ENCODE measurements at regions of chr17 and their contacts with region 1.

Region 1: DNA sequence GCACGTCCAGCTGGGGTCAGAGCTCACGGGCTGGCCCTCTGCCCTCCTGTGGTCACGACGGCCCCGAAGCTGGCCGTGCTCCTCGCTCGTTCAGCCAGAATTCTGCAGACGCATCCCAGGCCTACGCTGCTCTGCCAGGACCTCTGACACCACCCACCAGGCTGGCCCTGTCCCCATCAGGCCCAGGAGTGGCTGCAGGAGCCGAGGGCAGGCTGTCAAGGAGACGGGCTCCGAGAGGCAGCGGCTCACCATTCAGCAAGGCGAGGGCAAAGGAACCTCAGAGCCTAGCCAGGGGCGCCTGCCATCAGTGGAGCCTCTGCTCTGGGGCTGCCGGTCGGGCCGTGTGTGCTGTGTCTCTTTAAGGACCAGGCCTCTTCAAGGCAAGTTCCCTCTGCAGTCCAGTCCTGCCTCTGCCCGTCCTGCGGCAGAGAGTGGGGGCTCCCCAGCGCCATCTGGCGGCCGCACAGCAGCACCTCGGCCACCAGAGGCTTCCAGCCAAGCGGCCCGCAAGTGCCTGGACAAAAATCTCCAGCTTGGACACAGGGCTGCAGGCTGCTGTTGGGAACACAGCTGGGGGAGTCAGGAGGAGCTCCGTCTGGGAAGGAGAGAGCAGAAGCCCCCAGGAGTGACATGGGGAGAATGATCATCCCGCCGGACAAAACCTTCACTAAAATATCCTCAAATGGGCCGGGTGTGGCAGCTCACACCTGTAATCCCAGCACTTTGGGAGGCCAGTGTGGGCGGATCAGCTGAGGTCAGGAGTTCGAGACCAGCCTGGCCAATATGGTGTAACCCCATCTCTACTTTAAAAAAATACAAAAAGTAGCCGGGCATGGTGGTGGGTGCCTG is 7.4 kb upstream of the ABR start:
- DNase-seq: peak; percentile 49
- H3K4me3 ChIP-seq: peak overlapping the region; percentile 25; the same call in 1 of the 2 replicates
- CTCF ChIP-seq: peak; percentile 99

Region 2: GRCh38 chr17:1055751-1056645 is 131.1 kb before region 1 on chr17:
- CTCF ChIA-PET with region 1: interaction called, 21 read pairs
- POLR2A ChIA-PET with region 1: no interaction called
- DNase-seq: no peak
- H3K4me3 ChIP-seq: no peak overlapping the region
- CTCF ChIP-seq: peak; percentile 76

Region 3: DNA sequence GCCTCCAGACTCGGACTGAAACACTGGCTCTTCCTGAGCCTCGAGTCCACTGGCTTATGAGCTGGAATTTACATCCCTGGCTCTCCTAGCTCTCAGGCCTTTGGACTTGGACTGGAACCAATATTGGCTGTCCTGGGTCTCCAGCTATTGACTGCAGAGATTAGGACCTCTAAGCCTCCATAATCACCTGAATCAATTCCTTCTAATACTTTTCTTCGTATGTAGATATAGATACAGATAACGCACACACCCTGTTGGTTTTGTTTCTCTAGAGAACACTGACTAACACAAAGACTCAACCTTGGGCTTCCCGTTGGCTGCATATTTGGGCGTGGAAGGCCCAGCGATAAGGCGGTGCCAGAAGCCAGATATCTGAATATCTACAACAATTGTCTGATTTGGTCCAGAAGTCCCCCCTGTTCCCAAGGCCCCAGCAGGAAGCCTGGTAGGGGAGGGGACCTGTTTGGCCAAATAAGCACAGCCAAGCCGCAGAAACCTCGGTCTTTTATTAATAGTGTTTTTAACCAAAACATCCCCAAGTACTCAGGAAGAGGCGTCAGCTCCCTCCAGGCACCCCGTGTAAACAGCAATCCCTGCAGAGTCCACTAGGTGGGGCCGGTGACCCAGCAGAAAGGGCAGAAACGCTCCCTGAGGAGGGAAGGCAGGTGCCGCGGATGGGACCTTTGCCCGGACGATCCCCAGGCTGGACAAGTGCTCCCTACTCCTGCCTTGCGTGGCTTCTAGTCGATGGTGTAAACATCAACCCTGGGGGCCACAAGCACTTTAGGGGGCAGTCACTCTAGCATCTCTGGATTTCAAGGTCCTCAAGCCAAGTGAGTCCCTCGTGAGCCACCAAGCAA is 64.4 kb before region 1 on chr17:
- CTCF ChIA-PET with region 1: interaction called, 273 read pairs
- POLR2A ChIA-PET with region 1: interaction called, 5 read pairs
- DNase-seq: no peak
- H3K4me3 ChIP-seq: no peak overlapping the region
- CTCF ChIP-seq: peak; percentile 86

Region 4: DNA sequence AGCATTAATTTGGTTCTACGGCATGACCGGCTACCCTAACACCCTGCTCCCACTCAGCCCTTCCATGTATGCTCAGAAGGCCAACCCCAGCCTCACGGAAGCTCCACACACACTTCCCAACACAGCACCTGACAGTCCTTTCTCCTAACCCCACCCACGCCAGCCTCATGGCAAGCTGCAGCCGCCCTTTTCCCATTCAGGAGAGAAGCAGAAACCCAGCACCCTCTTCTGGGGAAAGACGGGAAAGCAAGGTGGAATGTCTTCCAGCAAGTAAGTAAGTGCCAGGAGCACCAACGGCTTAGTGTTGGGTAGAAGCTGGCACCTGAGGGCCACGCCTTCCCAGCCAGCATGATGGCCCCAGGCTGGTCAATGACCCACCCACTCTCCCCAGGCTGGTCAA is 39.5 kb before region 1 on chr17:
- CTCF ChIA-PET with region 1: interaction called, 11 read pairs
- POLR2A ChIA-PET with region 1: no interaction called
- DNase-seq: no peak
- H3K4me3 ChIP-seq: no peak overlapping the region
- CTCF ChIP-seq: peak; percentile 49

Region 5: GRCh38 chr17:1197781-1198490 is 10.8 kb after region 1 on chr17:
- CTCF ChIA-PET with region 1: interaction called, 55 read pairs
- POLR2A ChIA-PET with region 1: interaction called, 4 read pairs
- DNase-seq: no peak
- H3K4me3 ChIP-seq: no peak overlapping the region
- CTCF ChIP-seq: no peak

Region 6: DNA sequence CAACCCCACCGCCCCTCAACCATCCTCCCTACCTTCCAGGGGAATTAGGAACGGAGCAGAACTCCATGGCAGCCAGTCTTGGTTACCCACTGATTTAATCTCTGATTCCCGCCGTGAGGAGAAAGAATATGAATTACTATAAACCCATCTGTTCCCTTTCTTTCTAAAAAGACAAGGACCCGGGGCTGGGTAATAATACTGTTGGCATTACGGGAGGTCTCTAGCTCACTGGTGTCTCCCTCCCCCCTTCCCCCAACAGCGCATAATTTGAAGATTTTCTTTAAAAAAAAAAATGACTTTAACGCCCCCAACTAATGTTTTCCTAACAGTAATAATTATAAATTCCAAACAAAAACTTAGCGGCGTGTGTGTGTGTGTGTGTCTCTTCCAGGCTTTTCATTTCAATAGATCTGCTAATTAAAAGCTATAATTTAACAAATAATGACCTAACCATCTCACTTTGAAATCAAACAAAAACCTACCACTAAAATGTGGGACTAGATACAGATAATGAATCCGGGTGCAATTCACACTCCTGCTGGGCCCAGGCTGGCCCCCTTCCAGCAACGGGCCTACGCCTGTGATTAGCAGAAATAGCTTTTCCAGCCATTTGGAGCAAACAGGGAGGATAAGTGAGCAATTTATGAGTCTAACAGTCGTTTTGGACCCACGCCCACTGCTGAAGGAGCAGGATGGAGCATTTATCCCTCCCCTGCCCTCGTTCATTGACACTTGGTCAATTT is 64.9 kb after region 1 on chr17:
- CTCF ChIA-PET with region 1: no interaction called
- POLR2A ChIA-PET with region 1: no interaction called
- DNase-seq: no peak
- H3K4me3 ChIP-seq: no peak overlapping the region
- CTCF ChIP-seq: no peak

Region 7: GRCh38 chr17:1351971-1352370 is 164.8 kb after region 1 on chr17:
- CTCF ChIA-PET with region 1: no interaction called
- POLR2A ChIA-PET with region 1: no interaction called
- DNase-seq: no peak
- H3K4me3 ChIP-seq: no peak overlapping the region
- CTCF ChIP-seq: no peak